HCT116 (cell line): ENCODE measurements at regions of chr3 and their contacts with region 1.

Region 1: GRCh38 chr3:128170805-128171516 is 17.7 kb downstream of the EEFSEC start:
- DNase-seq: peak; percentile 56
- ATAC-seq: peak; percentile 99
- H3K4me3 ChIP-seq: no peak overlapping the region
- H3K27ac ChIP-seq: no peak overlapping the region
- H3K4me1 ChIP-seq: peaks cover 0 to 7% of the 10 kb centered on the region in 2 experiments; a peak in 1 of 4 replicates
- H3K27me3 ChIP-seq: no peaks in the 10 kb centered on the region
- CTCF ChIP-seq: peak; percentile 85 to 98 (median 90)
- POLR2A ChIP-seq: no peak
- RAD21 ChIP-seq: peak; percentile 86

Region 2: GRCh38 chr3:128322066-128323022 is 151.4 kb after region 1 on chr3:
- CTCF ChIA-PET with region 1: interaction called, 7 read pairs
- POLR2A ChIA-PET with region 1: no interaction called
- RAD21 ChIA-PET with region 1: interaction called in 1 of 2 experiments, 3 read pairs
- intact Hi-C with region 1: loop called (anchors 1 kb)
- DNase-seq: no peak
- ATAC-seq: peak; percentile 88
- H3K4me3 ChIP-seq: no peak overlapping the region
- H3K27ac ChIP-seq: no peak overlapping the region
- H3K4me1 ChIP-seq: no peaks in the 10 kb centered on the region
- H3K27me3 ChIP-seq: no peaks in the 10 kb centered on the region
- CTCF ChIP-seq: peak; percentile 44 to 76 (median 60); a peak in 5 of 6 replicates
- POLR2A ChIP-seq: no peak
- RAD21 ChIP-seq: peak; percentile 56

Region 3: GRCh38 chr3:128426128-128426921 is 255.4 kb after region 1 on chr3:
- CTCF ChIA-PET with region 1: no interaction called
- POLR2A ChIA-PET with region 1: no interaction called
- RAD21 ChIA-PET with region 1: no interaction called
- intact Hi-C with region 1: loop called (anchors 5 kb)
- DNase-seq: no peak
- ATAC-seq: peak; percentile 82
- H3K4me3 ChIP-seq: peak overlapping the region; percentile 8 to 49; a peak in 2 of 4 replicates
- H3K27ac ChIP-seq: peak overlapping the region; percentile 44; the same call in 1 of the 2 replicates
- H3K4me1 ChIP-seq: peaks cover 40 to 61% of the 10 kb centered on the region in 2 experiments
- H3K27me3 ChIP-seq: peaks cover 6% of the 10 kb centered on the region
- CTCF ChIP-seq: peak in 2 of 3 experiments; percentile 63 to 74; a peak in 4 of 6 replicates
- POLR2A ChIP-seq: no peak
- RAD21 ChIP-seq: no peak

Region 4: GRCh38 chr3:128503164-128503651 is 332.2 kb after region 1 on chr3:
- CTCF ChIA-PET with region 1: no interaction called
- POLR2A ChIA-PET with region 1: no interaction called
- RAD21 ChIA-PET with region 1: no interaction called
- intact Hi-C with region 1: loop called (anchors 2 kb)
- DNase-seq: no peak
- ATAC-seq: peak; percentile 59; the same call in 1 of the 2 replicates
- H3K4me3 ChIP-seq: no peak overlapping the region
- H3K27ac ChIP-seq: no peak overlapping the region
- H3K4me1 ChIP-seq: peaks cover 0 to 22% of the 10 kb centered on the region in 2 experiments; a peak in 2 of 4 replicates
- H3K27me3 ChIP-seq: no peaks in the 10 kb centered on the region
- CTCF ChIP-seq: peak; percentile 12 to 44 (median 36); a peak in 4 of 6 replicates
- POLR2A ChIP-seq: no peak
- RAD21 ChIP-seq: peak; percentile 38

Region 5: DNA sequence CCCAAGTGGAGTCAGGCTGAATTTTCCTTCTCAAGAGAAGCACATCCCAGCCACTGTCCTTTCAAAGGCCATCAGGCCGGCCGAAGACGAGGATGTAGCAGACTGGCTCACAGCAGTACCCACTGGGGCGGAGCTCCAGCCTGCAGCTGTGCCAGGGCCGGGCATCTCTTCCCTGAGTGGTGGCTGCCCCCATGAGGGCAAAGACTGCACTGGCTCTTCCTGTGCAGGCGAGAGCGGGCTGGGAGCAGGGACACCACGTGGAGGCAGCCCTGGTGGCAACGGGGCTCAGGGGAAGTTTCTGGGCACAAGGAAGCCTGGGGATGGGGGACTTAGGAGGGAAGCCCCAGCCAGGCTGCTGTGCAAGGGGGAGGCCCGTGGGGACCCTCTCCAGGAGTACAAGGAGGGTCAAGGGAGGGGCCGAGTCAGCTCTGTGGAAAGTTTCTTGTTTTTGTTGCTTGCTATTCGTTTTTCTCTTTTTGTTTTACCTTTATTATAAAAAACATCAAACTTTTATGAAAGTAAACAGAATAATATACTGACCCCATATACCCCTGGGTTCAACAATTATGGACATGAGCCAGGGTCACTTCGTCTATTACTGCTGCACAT is 413.6 kb after region 1 on chr3:
- CTCF ChIA-PET with region 1: interaction called, 10 read pairs
- POLR2A ChIA-PET with region 1: no interaction called
- RAD21 ChIA-PET with region 1: no interaction called
- intact Hi-C with region 1: loop called (anchors 1 kb)
- DNase-seq: peak; percentile 68
- ATAC-seq: peak; percentile 100
- H3K4me3 ChIP-seq: no peak overlapping the region
- H3K27ac ChIP-seq: no peak overlapping the region
- H3K4me1 ChIP-seq: peaks cover 0 to 10% of the 10 kb centered on the region in 2 experiments; a peak in 1 of 4 replicates
- H3K27me3 ChIP-seq: no peaks in the 10 kb centered on the region
- CTCF ChIP-seq: peak; percentile 89 to 97 (median 91)
- POLR2A ChIP-seq: no peak
- RAD21 ChIP-seq: peak; percentile 99

Region 6: DNA sequence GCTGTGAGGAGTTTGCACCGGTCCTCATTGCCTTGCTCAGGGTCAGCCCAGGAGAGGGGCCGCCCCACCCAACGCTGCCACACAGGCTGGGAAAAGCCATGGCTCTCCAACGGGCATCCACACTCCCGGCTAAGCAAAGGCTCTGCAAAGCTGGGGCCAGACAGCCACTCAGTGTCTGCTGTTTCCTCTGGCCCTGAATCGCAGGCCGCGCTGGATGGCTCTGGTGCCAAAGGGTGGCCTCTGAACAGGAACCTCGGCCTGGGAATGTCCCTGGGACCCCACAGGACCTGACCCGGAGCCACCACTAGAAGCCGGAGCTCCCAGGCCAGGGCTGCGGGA is 436.7 kb after region 1 on chr3:
- CTCF ChIA-PET with region 1: interaction called, 3 read pairs
- POLR2A ChIA-PET with region 1: no interaction called
- RAD21 ChIA-PET with region 1: no interaction called
- intact Hi-C with region 1: loop called (anchors 1 kb)
- DNase-seq: no peak
- ATAC-seq: no peak
- H3K4me3 ChIP-seq: no peak overlapping the region
- H3K27ac ChIP-seq: no peak overlapping the region; the same call in 1 of the 2 replicates
- H3K4me1 ChIP-seq: peaks cover 0 to 3% of the 10 kb centered on the region in 2 experiments; a peak in 1 of 4 replicates
- H3K27me3 ChIP-seq: no peaks in the 10 kb centered on the region
- CTCF ChIP-seq: no peak
- POLR2A ChIP-seq: no peak
- RAD21 ChIP-seq: no peak